PC-9 (cell line): ENCODE measurements at regions of chr6 and their contacts with region 1.

Region 1: DNA sequence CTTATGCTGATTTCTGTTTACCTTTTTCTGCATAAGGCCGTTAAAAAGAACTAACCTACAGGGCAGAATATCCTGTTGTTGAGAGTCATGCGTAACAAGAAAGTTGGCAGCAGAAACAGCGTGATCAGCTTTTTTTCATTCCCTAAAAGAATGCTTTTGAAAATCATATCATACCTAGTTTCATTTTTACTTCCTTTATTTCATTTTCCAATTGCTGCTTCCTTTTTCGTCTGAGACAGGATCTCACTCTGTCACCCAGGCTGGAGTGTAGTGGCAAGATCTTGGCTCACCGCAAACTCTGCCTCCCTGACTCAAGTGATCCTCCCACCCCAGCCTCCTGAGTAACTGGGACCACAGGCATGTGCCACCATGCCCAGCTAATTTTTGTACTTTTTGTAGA is 4.1 kb downstream of the CALHM6 start:
- DNase-seq: no peak
- H3K4me3 ChIP-seq: no peak overlapping the region
- H3K27ac ChIP-seq: no peak overlapping the region
- H3K4me1 ChIP-seq: no peaks in the 10 kb centered on the region
- H3K27me3 ChIP-seq: peaks cover 28% of the 10 kb centered on the region; the same call in 1 of the 2 replicates
- CTCF ChIP-seq: no peak

Region 2: GRCh38 chr6:116328528-116328903 is 136.7 kb before region 1 on chr6:
- CTCF ChIA-PET with region 1: no interaction called
- POLR2A ChIA-PET with region 1: no interaction called
- intact Hi-C with region 1: loop called (anchors 1 kb)
- DNase-seq: no peak
- H3K4me3 ChIP-seq: no peak overlapping the region
- H3K27ac ChIP-seq: no peak overlapping the region
- H3K4me1 ChIP-seq: no peaks in the 10 kb centered on the region
- H3K27me3 ChIP-seq: no peaks in the 10 kb centered on the region
- CTCF ChIP-seq: no peak

Region 3: GRCh38 chr6:116405138-116405537 is 60.1 kb before region 1 on chr6:
- CTCF ChIA-PET with region 1: no interaction called
- POLR2A ChIA-PET with region 1: no interaction called
- intact Hi-C with region 1: no loop called
- DNase-seq: no peak
- H3K4me3 ChIP-seq: no peak overlapping the region
- H3K27ac ChIP-seq: no peak overlapping the region
- H3K4me1 ChIP-seq: no peaks in the 10 kb centered on the region
- H3K27me3 ChIP-seq: no peaks in the 10 kb centered on the region
- CTCF ChIP-seq: no peak

Region 4: DNA sequence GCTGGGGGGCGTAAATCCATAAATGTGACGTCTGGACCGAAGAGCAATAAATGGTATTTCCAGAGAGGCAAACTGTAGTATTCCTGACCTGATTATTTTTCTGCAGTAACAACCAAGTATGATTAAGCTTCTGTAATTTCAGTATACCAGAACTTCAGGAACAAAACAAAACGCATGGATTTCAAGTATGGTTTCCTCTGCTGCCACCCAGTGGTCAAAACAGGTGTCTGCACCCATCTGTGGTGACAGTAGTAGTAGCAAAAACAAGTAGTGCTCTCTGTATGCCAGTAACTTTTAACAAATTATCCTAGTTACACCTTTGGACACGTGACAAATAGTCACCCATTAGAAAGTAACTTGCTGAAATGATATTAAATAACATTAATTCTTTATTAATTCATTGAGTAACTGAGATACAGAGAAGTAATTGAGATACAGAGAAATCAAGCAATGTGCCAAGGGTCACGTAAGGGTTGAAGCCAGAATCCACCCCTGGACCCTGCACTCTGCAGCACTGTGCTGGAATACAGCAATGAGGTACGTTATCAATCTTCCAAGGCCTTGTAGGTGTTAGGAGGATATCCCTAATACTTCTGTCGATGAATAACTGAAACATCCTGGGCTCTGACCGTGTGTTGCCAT is 96.3 kb after region 1 on chr6:
- CTCF ChIA-PET with region 1: no interaction called
- POLR2A ChIA-PET with region 1: no interaction called
- intact Hi-C with region 1: no loop called
- DNase-seq: peak; percentile 62 to 65
- H3K4me3 ChIP-seq: no peak overlapping the region
- H3K27ac ChIP-seq: no peak overlapping the region
- H3K4me1 ChIP-seq: peaks cover 14% of the 10 kb centered on the region; the same call in 1 of the 2 replicates
- H3K27me3 ChIP-seq: no peaks in the 10 kb centered on the region
- CTCF ChIP-seq: peak; percentile 96